GM18951 (cell line): ENCODE measurements at regions of chr6 and their contacts with region 1.

Region 1: GRCh38 chr6:136792410-136793262 is at the start of gene MAP3K5:
- POLR2A ChIP-seq: peak; percentile 51

Region 2: DNA sequence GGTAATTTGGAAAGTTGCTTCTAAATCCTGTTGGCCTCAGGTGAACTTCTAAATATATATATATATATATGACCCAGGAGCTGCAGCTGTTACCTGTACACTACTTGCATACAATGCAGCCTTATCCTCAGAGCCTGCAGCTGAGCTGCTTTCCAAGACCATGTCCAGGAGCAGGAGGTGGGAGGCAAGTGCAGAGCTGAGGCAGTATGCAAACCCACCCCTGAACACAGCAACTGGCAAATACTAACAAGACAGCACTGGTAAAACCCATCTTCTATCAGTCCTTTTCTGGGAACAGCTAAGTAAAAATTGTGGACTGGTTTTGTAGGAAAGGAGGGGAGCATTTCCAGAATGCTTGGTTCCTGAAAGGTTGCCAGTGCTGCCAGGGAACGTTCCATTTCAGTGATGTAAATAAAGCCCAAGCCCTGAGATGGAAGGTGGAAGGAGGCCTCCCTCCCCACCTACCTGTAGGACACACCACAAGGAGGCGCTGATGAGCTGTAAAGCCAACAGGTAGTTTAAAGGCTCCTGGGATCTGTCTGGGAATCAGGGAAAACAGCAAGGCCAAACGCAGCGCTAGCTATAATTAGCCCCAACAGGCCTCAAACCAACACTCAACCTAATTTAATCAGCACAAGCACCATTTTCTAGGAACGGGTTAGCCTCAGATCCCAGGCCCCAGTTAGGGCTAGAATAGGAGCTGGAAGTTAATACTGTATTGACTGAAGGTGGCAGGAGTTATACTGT is 148.6 kb before region 1 on chr6:
- in situ Hi-C with region 1: loop called (anchors 5 kb)
- POLR2A ChIP-seq: no peak